ENCODE measurements at regions of chr14 and their contacts with region 1.

Region 1: GRCh38 chr14:88562831-88563686 is at the start of gene ZC3H14:
- DNase-seq: peak; percentile 80 to 89 (median 87)
- H3K4me3 ChIP-seq: peak within 1 kb of the TSS; percentile 15 to 76
- H3K4me3 Mint-ChIP-seq: peak within 1 kb of the TSS; percentile 90 to 96 (median 94)
- H3K27ac ChIP-seq: peak within 1 kb of the TSS; percentile 69
- H3K27ac Mint-ChIP-seq: peak within 1 kb of the TSS; percentile 58 to 94 (median 91)
- H3K4me1 ChIP-seq: peaks cover 20% of the 10 kb centered on the region
- H3K4me1 Mint-ChIP-seq: peaks cover 18 to 38% (median 24%) of the 10 kb centered on the region in 4 donors
- H3K27me3 ChIP-seq: no peaks in the 10 kb centered on the region
- H3K27me3 Mint-ChIP-seq: peaks cover 0 to 6% of the 10 kb centered on the region in 2 donors
- total RNA-seq, gene ZC3H14: 43.4 to 51.8 TPM

Region 2: DNA sequence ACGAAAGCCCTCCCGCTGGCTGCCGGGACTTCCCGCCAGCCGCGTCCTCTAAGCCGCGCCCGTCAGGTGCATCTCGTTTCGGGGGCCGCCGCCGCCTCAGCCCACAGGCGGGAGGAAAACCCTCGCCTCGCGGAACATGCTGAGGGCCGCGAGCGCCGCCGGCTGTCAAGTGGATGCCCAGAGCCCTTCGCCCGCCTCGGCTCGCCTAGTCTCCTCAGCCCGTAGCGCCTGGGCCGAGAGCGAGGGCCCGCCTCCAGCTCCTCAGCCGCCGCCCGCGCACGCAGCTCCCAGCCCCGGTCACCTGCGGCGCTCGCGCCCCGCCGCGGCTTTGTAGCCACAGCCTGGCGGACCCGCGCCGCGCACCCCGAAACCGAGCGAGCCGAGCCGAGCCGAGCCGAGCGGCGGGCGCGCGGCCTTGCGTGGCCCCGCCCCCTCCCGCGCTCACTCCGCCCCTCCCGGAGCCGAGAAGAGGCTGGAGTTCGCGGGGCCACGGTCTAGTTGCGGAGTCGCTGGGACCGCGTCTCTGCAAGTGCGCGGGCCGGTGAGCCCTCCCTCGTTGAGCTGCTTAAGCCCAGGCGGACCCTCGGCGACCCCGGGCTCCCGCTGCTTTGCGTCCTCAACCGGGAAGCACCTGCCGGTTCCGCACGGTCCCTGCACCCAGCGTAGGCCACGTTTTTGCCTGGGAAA is 229.7 kb after region 1 on chr14 and contains the start of gene EML5:
- CTCF ChIA-PET with region 1: no interaction called
- POLR2A ChIA-PET with region 1: no interaction called
- intact Hi-C with region 1: loop called (anchors 5 kb)
- DNase-seq: peak; percentile 82 to 86 (median 86)
- H3K4me3 ChIP-seq: peak within 1 kb of the TSS; percentile 57 to 86
- H3K4me3 Mint-ChIP-seq: peak within 1 kb of the TSS; percentile 87 to 93 (median 92)
- H3K27ac ChIP-seq: peak within 1 kb of the TSS; percentile 63
- H3K27ac Mint-ChIP-seq: peak within 1 kb of the TSS; percentile 77 to 91 (median 87)
- H3K4me1 ChIP-seq: peaks cover 22% of the 10 kb centered on the region
- H3K4me1 Mint-ChIP-seq: peaks cover 8 to 23% (median 13%) of the 10 kb centered on the region in 4 donors
- H3K27me3 ChIP-seq: no peaks in the 10 kb centered on the region
- H3K27me3 Mint-ChIP-seq: peaks cover 0 to 2% of the 10 kb centered on the region in 2 donors
- total RNA-seq, gene EML5: 5.5 to 5.6 TPM

Region 3: DNA sequence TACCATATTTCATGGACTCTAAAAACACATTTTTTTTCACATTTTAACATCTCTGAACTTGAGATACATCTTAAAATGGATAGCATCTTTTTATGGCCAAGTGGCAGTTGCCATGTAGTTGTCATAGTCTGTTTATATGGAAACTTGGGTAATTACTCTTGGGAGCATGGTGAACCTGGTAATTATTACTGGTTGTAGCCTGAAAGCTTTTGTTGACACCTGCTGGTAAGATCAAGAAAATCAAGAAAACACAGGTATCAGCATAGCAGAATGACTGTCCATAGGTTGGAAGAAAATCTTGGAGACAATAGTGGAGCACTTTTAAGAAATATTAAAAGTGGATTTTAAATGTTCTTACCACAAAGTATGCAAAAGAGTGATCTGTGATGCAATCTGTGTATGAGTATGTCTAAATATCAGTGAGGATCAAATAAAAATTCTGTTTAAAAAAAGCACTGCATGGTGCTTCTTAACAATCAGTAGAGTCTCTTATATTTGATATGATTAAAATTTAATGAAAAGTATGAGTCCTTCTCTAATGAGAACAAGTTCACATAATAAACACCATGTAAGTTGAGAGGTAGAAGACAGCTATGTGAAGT is 305.6 kb after region 1 on chr14:
- CTCF ChIA-PET with region 1: no interaction called
- POLR2A ChIA-PET with region 1: no interaction called
- intact Hi-C with region 1: loop called (anchors 10 kb)
- DNase-seq: peak in 4 of 5 donors; percentile 5 to 12 (median 10)
- H3K4me3 ChIP-seq: no peak overlapping the region
- H3K4me3 Mint-ChIP-seq: no peak overlapping the region
- H3K27ac ChIP-seq: no peak overlapping the region
- H3K27ac Mint-ChIP-seq: no peak overlapping the region
- H3K4me1 ChIP-seq: no peaks in the 10 kb centered on the region
- H3K4me1 Mint-ChIP-seq: no peaks in the 10 kb centered on the region
- H3K27me3 ChIP-seq: no peaks in the 10 kb centered on the region
- H3K27me3 Mint-ChIP-seq: no peaks in the 10 kb centered on the region

Measured in CD4-positive, alpha-beta memory T cell (primary cell).